ENCODE measurements at regions of chr16 and their contacts with region 1.

Region 1: GRCh38 chr16:27639561-27640276 is 89.8 kb downstream of the KATNIP start:
- DNase-seq: no peak
- ATAC-seq: peak; percentile 61 to 83 (median 70)
- H3K4me3 ChIP-seq: no peak overlapping the region
- H3K27ac ChIP-seq: no peak overlapping the region
- H3K4me1 ChIP-seq: no peaks in the 10 kb centered on the region
- H3K27me3 ChIP-seq: no peaks in the 10 kb centered on the region
- CTCF ChIP-seq: peak; percentile 34 to 66 (median 50)
- POLR2A ChIP-seq: no peak

Region 2: DNA sequence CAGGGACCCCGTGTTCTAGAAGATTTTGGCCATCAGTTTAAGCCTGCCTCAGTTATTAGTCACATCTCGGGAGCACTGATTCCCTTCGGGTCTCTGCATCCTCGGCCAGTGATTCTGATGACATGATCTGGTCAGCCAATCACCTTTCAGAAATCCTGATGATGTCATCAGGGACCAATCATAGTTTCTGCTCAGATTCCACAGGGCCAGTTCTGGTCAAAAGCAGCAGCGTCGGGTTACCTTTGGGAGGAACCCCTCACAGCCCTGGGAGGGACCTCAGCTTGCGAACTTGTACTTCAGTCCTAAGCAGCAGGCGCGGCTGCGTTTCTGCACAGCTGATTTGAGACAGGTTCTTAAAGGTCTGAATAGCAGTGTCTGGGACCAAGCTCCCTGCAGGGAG is 422.5 kb before region 1 on chr16:
- intact Hi-C with region 1: no loop called
- DNase-seq: peak in 1 of 5 donors; percentile 41
- ATAC-seq: peak in 3 of 4 donors; percentile 4 to 71 (median 18)
- H3K4me3 ChIP-seq: no peak overlapping the region
- H3K27ac ChIP-seq: no peak overlapping the region
- H3K4me1 ChIP-seq: peaks cover 0 to 11% (median under 1%) of the 10 kb centered on the region in 12 donors
- H3K27me3 ChIP-seq: no peaks in the 10 kb centered on the region
- CTCF ChIP-seq: no peak
- POLR2A ChIP-seq: no peak

Region 3: DNA sequence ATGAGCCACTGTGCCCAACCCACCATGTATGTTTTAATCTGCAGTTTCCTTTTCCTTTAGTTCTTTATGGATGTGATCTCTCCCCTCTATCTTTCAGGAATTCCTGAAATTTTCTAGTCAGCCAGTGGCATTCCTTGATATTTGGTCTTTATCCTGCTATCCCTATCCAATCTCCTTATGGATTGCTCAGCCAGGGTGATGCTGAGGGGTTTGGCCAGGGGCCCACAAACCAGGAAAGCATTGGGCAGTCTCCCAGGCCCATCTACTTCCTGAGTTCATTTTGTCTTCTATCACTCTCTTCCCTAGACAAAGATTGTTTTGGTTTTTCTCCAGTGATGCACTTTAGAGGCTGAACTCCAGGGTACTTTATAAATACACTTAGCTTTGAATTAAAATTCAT is 26.2 kb after region 1 on chr16:
- intact Hi-C with region 1: no loop called
- DNase-seq: no peak
- ATAC-seq: no peak
- H3K4me3 ChIP-seq: no peak overlapping the region
- H3K27ac ChIP-seq: no peak overlapping the region
- H3K4me1 ChIP-seq: no peaks in the 10 kb centered on the region
- H3K27me3 ChIP-seq: no peaks in the 10 kb centered on the region
- CTCF ChIP-seq: no peak
- POLR2A ChIP-seq: no peak

Region 4: GRCh38 chr16:27703545-27703944 is 63.8 kb after region 1 on chr16:
- intact Hi-C with region 1: no loop called
- DNase-seq: no peak
- ATAC-seq: no peak
- H3K4me3 ChIP-seq: no peak overlapping the region
- H3K27ac ChIP-seq: no peak overlapping the region
- H3K4me1 ChIP-seq: peaks cover 0 to 11% (median 0%) of the 10 kb centered on the region in 12 donors
- H3K27me3 ChIP-seq: no peaks in the 10 kb centered on the region
- CTCF ChIP-seq: no peak
- POLR2A ChIP-seq: no peak

Region 5: GRCh38 chr16:27867122-27868110 is 227.7 kb after region 1 on chr16:
- intact Hi-C with region 1: loop called in 7 of 10 experiments (anchors 5 to 10 kb)
- DNase-seq: peak in 4 of 5 donors; percentile 20 to 72 (median 38)
- ATAC-seq: peak; percentile 47 to 93 (median 81)
- H3K4me3 ChIP-seq: no peak overlapping the region
- H3K27ac ChIP-seq: no peak overlapping the region
- H3K4me1 ChIP-seq: no peaks in the 10 kb centered on the region
- H3K27me3 ChIP-seq: peaks cover 0 to 2% (median 0%) of the 10 kb centered on the region in 9 donors
- CTCF ChIP-seq: peak; percentile 21 to 59 (median 40)
- POLR2A ChIP-seq: no peak

Region 6: GRCh38 chr16:27879601-27880247 is 240.0 kb after region 1 on chr16:
- intact Hi-C with region 1: loop called in 1 of 10 experiments (anchors 10 kb)
- DNase-seq: peak in 4 of 5 donors; percentile 27 to 65 (median 54)
- ATAC-seq: peak; percentile 47 to 82 (median 80)
- H3K4me3 ChIP-seq: no peak overlapping the region
- H3K27ac ChIP-seq: no peak overlapping the region
- H3K4me1 ChIP-seq: peaks cover 0 to 4% (median 0%) of the 10 kb centered on the region in 12 donors
- H3K27me3 ChIP-seq: no peaks in the 10 kb centered on the region
- CTCF ChIP-seq: no peak
- POLR2A ChIP-seq: no peak

Region 7: GRCh38 chr16:27972500-27972899 is 332.8 kb after region 1 on chr16:
- intact Hi-C with region 1: loop called in 1 of 10 experiments (anchors 10 kb)
- DNase-seq: peak in 1 of 5 donors; percentile 37
- ATAC-seq: peak in 3 of 4 donors; percentile 51 to 69 (median 61)
- H3K4me3 ChIP-seq: no peak overlapping the region
- H3K27ac ChIP-seq: no peak overlapping the region
- H3K4me1 ChIP-seq: peaks cover 0 to 2% (median 0%) of the 10 kb centered on the region in 12 donors
- H3K27me3 ChIP-seq: no peaks in the 10 kb centered on the region
- CTCF ChIP-seq: peak in 11 of 12 donors; percentile 31 to 61 (median 50)
- POLR2A ChIP-seq: no peak

Region 8: GRCh38 chr16:28063641-28064061 is 423.9 kb after region 1 on chr16 and contains the start of gene GSG1L:
- intact Hi-C with region 1: loop called in 6 of 10 experiments (anchors 5 to 10 kb)
- DNase-seq: no peak
- ATAC-seq: peak in 3 of 4 donors; percentile 55 to 70 (median 69)
- H3K4me3 ChIP-seq: peak within 1 kb of the TSS in 11 of 12 donors; percentile 4 to 50 (median 36)
- H3K27ac ChIP-seq: no peak within 1 kb of the TSS
- H3K4me1 ChIP-seq: peaks cover 0 to 14% (median 1%) of the 10 kb centered on the region in 12 donors
- H3K27me3 ChIP-seq: peaks cover 5 to 57% (median 29%) of the 10 kb centered on the region in 9 donors
- CTCF ChIP-seq: peak in 8 of 12 donors; percentile 9 to 45 (median 22)
- POLR2A ChIP-seq: no peak
- total RNA-seq, gene GSG1L: 0.66 to 8.7 (median 2.6) TPM in 6 of 9 donors, not detected in the others

Region 9: DNA sequence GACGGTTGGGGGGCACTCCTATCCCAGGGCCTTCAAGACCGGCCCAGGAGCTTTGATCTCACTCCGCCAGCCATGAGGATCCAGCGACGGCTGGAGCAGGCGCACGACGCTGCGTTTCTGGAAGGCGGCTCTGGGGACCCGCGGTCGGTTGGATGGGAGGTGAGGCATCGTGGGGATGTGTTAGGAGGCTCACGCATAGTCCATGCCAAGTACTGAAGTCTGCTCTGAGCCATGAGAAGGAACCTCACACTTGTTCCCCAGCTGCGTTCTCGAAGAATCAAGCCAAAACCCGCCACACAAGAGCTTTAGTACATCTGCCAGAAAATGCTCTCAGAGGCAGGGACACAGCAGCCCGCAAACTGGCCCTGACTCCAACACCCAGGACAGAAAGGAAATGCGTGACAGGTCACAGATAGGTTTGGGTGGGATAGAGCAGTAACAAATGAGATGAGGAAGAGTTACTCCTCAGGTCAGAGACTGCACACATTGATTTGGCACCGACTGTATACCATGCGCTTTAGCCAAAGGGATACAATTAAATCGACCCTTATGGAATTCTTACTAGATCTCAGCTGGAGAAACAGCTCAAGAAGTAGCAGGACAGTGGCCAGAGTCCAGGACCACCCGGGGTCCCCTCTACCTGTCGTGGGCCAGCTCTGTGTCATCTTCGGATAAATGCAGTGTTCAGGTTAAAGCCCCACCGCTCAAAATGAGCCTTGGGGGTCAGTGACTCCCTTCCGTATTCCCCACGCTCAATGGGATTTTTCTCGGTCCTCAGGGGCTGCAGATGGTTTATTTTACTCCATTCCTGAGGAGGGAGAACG is 430.5 kb after region 1 on chr16:
- intact Hi-C with region 1: loop called in 8 of 10 experiments (anchors 5 to 10 kb)
- DNase-seq: peak in 1 of 5 donors; percentile 47
- ATAC-seq: peak in 3 of 4 donors; percentile 14 to 30 (median 21)
- H3K4me3 ChIP-seq: no peak overlapping the region
- H3K27ac ChIP-seq: no peak overlapping the region
- H3K4me1 ChIP-seq: peaks cover 0 to 10% (median 0%) of the 10 kb centered on the region in 12 donors
- H3K27me3 ChIP-seq: peaks cover 0 to 24% (median 0%) of the 10 kb centered on the region in 9 donors
- CTCF ChIP-seq: no peak
- POLR2A ChIP-seq: no peak